Activated CD4-positive, alpha-beta T cell treated with anti-CD3 and anti-CD28 coated beads for 36 hours (primary cell): ENCODE measurements at regions of chr1 and their contacts with region 1.

Region 1: DNA sequence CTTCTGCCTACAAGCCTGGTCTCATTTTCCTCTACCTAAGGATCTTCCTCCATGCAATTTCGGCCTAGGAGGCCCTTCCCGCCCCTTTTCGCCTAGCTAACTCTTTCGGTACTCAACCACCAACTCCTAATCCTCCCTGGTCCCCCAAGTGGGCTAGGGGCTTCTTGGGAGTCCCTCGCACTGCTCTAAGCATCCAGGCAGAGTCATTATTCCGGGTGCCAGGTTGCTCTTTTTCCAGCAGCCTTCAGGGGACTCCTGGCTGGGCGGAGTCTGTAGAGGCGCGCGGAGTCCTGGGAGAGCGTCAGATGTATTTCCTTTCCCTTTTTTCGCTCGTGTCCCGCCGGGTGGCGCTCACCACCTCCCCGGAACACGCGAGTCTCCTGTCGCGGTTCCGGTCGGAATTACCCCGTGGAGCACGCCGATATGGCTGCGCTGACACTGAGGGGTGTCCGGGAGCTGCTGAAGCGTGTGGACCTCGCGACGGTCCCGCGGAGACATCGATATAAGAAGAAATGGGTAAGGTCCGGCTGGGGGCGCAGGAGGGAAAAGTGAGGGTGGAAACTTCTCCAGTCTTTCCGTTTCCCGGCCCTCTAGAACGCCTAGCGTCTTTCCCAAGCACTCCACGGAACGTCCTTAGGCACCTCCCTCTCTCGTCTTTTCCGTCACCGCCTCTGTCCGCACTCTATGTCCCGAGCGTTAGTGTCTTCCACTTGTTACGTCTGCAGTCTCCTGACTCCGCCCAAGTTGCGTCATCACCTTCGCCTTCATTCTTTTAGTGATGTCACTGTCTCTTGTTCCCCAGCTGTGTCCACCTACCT is at the start of gene NSUN4:
- DNase-seq: peak; percentile 93
- ATAC-seq: peak; percentile 94
- H3K4me3 Mint-ChIP-seq: peak within 1 kb of the TSS; percentile 87
- H3K27ac Mint-ChIP-seq: peak within 1 kb of the TSS; percentile 99
- H3K4me1 Mint-ChIP-seq: peaks cover 44% of the 10 kb centered on the region
- H3K27me3 Mint-ChIP-seq: no peaks in the 10 kb centered on the region
- total RNA-seq, gene NSUN4: 26.1 to 31.3 TPM

Region 2: DNA sequence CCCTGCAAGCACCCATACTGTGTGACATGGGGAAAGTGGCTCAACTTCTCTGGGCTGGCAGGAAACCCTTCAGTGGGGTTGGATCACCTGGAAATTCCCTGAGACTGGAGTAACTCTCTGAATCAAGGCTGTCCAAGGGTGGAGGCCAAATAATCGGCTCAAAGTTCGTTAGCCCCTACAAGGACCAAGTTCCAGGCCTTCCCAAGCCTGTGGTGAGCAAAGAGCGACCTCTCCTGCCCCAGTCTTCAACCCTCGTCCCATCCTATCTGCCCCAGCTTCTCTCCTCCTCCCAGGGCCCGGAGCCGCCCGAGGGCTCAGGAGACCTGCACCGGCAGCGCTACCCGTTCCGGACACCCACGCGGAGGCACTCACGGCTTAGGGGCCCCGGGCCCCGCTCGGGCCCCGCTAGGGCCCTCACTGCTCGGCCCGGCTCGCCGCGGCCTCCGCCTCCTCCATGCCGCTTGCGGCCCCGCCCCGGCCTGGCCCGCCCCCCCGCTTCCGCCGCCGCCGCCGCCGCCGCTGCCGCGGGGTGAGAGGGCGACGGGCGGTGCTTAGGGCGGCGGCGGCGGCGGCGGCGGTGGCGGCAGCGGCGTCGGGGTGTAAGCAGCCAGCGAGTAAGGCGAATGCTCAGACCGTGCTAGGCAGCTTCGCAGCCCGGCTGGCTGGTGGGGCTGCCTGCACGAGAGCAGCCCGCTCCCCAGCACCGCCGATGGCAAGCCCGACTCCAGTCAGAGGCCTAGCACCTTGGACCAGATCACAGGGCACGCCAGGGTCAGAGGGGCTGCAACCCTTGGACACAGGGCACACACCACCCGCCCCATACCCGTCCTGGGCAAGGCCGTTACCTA is 142.4 kb before region 1 on chr1 and contains the start of gene POMGNT1:
- CTCF ChIA-PET with region 1: no interaction called
- POLR2A ChIA-PET with region 1: no interaction called
- intact Hi-C with region 1: loop called in 1 of 2 experiments (anchors 1 kb)
- DNase-seq: peak; percentile 87
- ATAC-seq: peak; percentile 94
- H3K4me3 Mint-ChIP-seq: peak within 1 kb of the TSS; percentile 84
- H3K27ac Mint-ChIP-seq: peak within 1 kb of the TSS; percentile 82
- H3K4me1 Mint-ChIP-seq: peaks cover 19% of the 10 kb centered on the region
- H3K27me3 Mint-ChIP-seq: peaks cover 2% of the 10 kb centered on the region
- total RNA-seq, gene POMGNT1: 36.4 to 36.5 TPM

Region 3: DNA sequence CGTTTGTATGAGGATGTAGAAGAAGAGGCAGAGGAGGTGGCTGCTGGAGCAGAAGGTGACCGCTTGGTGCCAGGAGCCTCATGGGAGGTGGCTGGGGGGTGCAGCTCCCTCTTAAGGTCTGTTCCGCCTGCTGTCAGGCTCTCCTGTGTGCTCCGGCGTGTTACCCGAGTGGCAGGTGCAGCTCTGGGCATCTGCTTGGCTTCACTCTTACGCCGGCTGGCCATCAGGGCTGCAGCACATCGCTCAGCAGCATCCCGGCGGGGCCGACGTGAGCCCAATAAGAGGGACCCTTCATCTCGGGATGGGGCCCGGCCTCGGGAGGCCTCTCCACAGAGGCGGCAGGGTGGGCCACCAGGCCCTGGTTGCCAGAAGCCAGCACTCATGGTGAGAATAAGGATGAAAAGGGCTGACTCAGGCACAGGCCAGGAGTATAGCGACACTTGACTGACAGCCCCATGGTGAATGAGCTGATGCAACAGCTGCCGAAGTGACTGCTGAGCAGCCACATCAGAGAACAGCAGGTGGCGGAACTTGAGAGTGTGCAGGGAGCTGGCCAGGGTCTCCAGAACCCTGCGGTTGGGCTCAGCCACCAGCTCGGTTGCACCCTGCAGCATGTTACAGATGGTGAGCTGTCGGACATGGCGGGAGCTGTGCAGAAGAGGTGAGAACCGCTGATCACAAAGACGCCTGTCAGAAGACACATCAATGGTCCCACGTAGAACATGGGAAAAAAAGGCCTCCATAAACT is 54.7 kb before region 1 on chr1:
- CTCF ChIA-PET with region 1: no interaction called
- POLR2A ChIA-PET with region 1: no interaction called
- intact Hi-C with region 1: loop called in 1 of 2 experiments (anchors 5 kb)
- DNase-seq: peak; percentile 83
- ATAC-seq: peak; percentile 93
- H3K4me3 Mint-ChIP-seq: no peak overlapping the region
- H3K27ac Mint-ChIP-seq: peak overlapping the region; percentile 83
- H3K4me1 Mint-ChIP-seq: peaks cover 21% of the 10 kb centered on the region
- H3K27me3 Mint-ChIP-seq: no peaks in the 10 kb centered on the region

Region 4: DNA sequence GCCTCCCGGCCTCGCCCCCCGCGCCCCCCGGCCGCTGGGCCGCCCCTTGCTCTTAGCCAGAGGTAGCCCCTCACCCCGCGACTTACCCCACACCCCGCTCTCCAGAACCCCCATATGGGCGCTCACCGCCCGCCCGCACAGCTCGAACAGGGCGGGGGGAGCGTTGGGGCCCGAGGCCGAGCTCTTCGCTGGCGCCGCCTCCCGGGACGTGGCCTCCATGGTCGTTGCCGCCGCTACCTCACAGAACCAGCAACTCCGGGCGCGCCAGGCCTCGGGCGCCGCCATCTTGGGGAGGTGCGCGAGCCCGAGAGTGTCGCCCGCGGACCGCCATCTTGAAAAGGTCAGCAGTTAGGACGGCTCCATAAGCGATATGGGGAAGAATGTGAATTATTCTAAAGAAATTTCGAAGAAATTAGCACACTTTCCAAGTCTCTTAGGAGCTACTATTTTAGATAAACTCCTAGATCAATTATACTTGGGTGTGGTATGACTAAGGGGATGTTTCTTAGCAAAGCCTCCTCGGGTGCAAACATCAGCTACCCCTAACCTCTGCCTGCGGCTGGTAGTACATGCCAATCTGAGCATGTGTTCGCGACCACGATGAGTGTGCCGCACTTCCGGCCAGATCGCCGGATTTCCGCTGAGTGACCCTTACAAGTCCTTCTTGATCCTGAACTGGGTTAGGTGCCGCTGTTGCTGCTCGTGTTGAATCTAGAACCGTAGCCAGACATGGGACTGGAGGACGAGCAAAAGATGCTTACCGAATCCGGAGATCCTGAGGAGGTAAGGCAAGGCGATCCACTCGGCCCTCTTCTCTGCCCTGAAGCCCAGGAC is 37.4 kb before region 1 on chr1 and contains the starts of genes LRRC41 and UQCRH:
- CTCF ChIA-PET with region 1: interaction called, 5 read pairs
- POLR2A ChIA-PET with region 1: interaction called, 9 read pairs
- intact Hi-C with region 1: loop called (anchors 1 kb)
- DNase-seq: peak; percentile 96
- ATAC-seq: peak; percentile 88
- H3K4me3 Mint-ChIP-seq: peak within 1 kb of the TSS; percentile 95
- H3K27ac Mint-ChIP-seq: peak within 1 kb of the TSS; percentile 95
- H3K4me1 Mint-ChIP-seq: peaks cover 44% of the 10 kb centered on the region
- H3K27me3 Mint-ChIP-seq: no peaks in the 10 kb centered on the region
- total RNA-seq, gene LRRC41: 33.4 to 34.7 TPM
- total RNA-seq, gene UQCRH: 258 to 391 TPM

Region 5: GRCh38 chr1:47849005-47849521 is 1508.5 kb after region 1 on chr1:
- CTCF ChIA-PET with region 1: no interaction called
- POLR2A ChIA-PET with region 1: no interaction called
- intact Hi-C with region 1: no loop called
- DNase-seq: no peak
- ATAC-seq: no peak
- H3K4me3 Mint-ChIP-seq: no peak overlapping the region
- H3K27ac Mint-ChIP-seq: no peak overlapping the region
- H3K4me1 Mint-ChIP-seq: no peaks in the 10 kb centered on the region
- H3K27me3 Mint-ChIP-seq: peaks cover 3% of the 10 kb centered on the region